ENCODE measurements at regions of chr14 and their contacts with region 1.

Region 1: DNA sequence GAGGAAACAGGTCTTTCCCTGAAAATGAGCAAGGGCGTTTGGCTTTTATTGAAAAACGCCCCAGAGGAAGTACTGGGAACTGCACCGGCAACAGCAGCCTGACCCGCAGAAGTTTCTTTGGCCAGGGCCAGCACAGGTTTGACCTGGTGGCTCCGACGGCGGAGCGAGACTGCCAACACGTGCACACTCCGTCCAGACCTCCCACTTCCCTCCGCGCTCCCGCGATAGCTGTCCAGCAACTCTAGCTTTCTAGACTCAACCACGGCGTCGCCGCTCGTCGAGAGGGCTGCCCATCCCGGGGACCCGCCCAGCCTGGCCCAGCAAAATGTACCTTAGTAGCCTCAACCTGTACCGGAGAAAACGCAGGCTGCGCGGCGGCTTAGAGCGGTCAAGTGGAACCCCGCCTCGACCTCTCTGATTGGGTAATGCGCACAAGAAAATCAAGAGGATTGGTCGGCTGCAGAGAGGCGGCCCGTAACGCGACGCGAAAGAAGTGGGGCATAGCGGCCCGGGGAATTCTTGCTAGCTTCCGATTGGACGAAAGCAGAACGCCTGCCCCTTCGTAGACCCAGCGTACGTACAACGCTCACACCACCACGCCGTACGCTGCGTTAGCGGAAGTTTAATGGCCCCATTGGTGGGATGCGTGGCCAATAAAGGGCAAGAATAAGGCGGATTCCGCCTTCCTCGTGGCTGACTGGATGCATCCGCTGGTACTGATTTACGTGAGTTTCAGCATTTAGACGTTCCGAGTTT is at the start of gene WDR89:
- DNase-seq: peak; percentile 84 to 99 (median 97)
- ATAC-seq: peak; percentile 92
- H3K4me3 ChIP-seq: peak within 1 kb of the TSS; percentile 76
- H3K4me3 Mint-ChIP-seq: peak within 1 kb of the TSS; percentile 84 to 98 (median 91)
- H3K27ac ChIP-seq: peak within 1 kb of the TSS; percentile 95
- H3K27ac Mint-ChIP-seq: peak within 1 kb of the TSS; percentile 88 to 100 (median 97)
- H3K4me1 ChIP-seq: peaks cover 17 to 28% of the 10 kb centered on the region in 2 donors
- H3K4me1 Mint-ChIP-seq: peaks cover 24 to 63% (median 46%) of the 10 kb centered on the region in 7 donors
- H3K27me3 ChIP-seq: no peaks in the 10 kb centered on the region
- H3K27me3 Mint-ChIP-seq: no peaks in the 10 kb centered on the region
- total RNA-seq, gene WDR89: 12.6 to 44.1 (median 24.0) TPM

Region 2: DNA sequence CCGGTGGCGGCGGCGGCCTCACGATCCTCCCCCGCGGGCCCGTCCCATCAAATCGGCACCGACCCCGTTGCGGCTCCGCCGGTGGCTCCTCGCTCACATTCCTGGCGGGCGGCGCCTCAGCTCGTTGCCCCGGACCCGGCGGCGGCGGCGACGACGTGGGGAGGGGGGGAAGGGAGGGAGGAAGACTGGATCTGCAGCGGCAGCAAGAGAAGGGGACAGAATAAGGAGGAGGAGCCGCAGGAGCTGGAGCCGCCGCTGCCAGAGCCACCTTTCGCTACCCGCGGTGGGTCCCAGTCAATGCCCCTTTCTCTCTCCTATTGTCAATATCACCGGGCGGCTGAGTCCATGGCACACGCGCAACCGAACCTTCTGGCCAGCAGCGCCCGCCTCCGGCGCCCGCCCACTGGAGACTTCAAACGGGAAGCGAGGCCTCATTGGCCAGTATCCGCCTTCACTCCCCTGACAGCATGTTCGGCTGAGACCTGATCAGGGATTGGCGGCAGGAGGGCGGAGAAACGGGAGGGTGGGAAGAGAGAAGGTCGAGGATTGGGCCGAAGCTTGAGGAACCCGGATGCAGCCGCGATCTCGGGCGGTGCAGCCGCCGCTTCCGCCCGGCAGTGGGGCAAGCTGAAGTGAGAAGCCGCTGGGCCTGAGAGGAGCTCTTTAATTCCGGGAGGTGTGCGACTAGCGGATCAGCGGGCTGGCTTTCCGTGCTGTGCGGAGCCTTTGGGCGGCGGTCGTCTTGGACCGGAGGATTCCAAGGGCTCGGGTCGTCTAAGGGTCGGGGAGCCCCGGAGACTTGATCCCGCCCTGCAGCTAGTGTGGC is 98.4 kb before region 1 on chr14 and contains the start of gene PPP2R5E:
- CTCF ChIA-PET with region 1: no interaction called
- POLR2A ChIA-PET with region 1: interaction called, 14 read pairs
- intact Hi-C with region 1: loop called (anchors 1 kb)
- DNase-seq: peak; percentile 90 to 98 (median 97)
- ATAC-seq: peak; percentile 98
- H3K4me3 ChIP-seq: peak within 1 kb of the TSS; percentile 89
- H3K4me3 Mint-ChIP-seq: peak within 1 kb of the TSS; percentile 87 to 100 (median 97)
- H3K27ac ChIP-seq: peak within 1 kb of the TSS; percentile 93
- H3K27ac Mint-ChIP-seq: peak within 1 kb of the TSS; percentile 88 to 98 (median 93)
- H3K4me1 ChIP-seq: peaks cover 11 to 20% of the 10 kb centered on the region in 2 donors
- H3K4me1 Mint-ChIP-seq: peaks cover 23 to 40% (median 36%) of the 10 kb centered on the region in 7 donors
- H3K27me3 ChIP-seq: no peaks in the 10 kb centered on the region
- H3K27me3 Mint-ChIP-seq: peaks cover 0 to 2% (median 0%) of the 10 kb centered on the region in 5 donors
- total RNA-seq, gene PPP2R5E: 36.9 to 47.8 (median 37.7) TPM

Region 3: GRCh38 chr14:63581491-63581890 is 60.2 kb before region 1 on chr14:
- CTCF ChIA-PET with region 1: no interaction called
- POLR2A ChIA-PET with region 1: no interaction called
- intact Hi-C with region 1: no loop called
- DNase-seq: no peak
- ATAC-seq: no peak
- H3K4me3 ChIP-seq: no peak overlapping the region
- H3K4me3 Mint-ChIP-seq: no peak overlapping the region
- H3K27ac ChIP-seq: no peak overlapping the region
- H3K27ac Mint-ChIP-seq: no peak overlapping the region
- H3K4me1 ChIP-seq: no peaks in the 10 kb centered on the region
- H3K4me1 Mint-ChIP-seq: no peaks in the 10 kb centered on the region
- H3K27me3 ChIP-seq: no peaks in the 10 kb centered on the region
- H3K27me3 Mint-ChIP-seq: peaks cover 0 to 9% (median 6%) of the 10 kb centered on the region in 5 donors

Region 4: DNA sequence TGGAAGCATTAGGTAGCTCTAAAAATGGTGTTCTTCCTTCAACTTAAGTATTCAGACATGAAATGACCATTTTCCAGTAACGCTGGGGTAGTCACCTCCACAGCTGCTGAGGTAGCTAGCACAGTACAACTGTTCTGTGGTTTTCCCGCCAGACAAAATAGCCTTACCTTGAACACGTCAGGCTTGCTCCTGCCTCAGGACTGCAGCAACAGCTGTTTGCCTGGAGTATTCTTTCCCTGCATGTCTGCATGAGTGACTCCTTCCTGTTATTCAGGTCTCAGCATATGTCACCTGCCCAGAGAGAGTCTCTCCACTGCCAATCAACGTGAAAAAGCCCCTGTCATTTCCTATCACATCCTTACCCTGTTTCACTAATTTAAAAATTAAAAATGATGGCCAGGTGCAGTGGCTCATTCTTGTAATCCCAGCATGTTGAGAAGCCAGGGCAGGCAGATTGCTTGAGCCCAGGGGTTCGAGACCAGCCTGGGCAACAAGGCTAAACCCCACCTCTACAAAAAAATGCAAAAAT is 37.8 kb before region 1 on chr14:
- CTCF ChIA-PET with region 1: no interaction called
- POLR2A ChIA-PET with region 1: no interaction called
- intact Hi-C with region 1: no loop called
- DNase-seq: no peak
- ATAC-seq: no peak
- H3K4me3 ChIP-seq: no peak overlapping the region
- H3K4me3 Mint-ChIP-seq: no peak overlapping the region
- H3K27ac ChIP-seq: peak overlapping the region; percentile 21
- H3K27ac Mint-ChIP-seq: peak overlapping the region in 3 of 9 donors; percentile 26 to 66 (median 54)
- H3K4me1 ChIP-seq: no peaks in the 10 kb centered on the region
- H3K4me1 Mint-ChIP-seq: peaks cover 6 to 26% (median 15%) of the 10 kb centered on the region in 7 donors
- H3K27me3 ChIP-seq: no peaks in the 10 kb centered on the region
- H3K27me3 Mint-ChIP-seq: no peaks in the 10 kb centered on the region

Region 5: DNA sequence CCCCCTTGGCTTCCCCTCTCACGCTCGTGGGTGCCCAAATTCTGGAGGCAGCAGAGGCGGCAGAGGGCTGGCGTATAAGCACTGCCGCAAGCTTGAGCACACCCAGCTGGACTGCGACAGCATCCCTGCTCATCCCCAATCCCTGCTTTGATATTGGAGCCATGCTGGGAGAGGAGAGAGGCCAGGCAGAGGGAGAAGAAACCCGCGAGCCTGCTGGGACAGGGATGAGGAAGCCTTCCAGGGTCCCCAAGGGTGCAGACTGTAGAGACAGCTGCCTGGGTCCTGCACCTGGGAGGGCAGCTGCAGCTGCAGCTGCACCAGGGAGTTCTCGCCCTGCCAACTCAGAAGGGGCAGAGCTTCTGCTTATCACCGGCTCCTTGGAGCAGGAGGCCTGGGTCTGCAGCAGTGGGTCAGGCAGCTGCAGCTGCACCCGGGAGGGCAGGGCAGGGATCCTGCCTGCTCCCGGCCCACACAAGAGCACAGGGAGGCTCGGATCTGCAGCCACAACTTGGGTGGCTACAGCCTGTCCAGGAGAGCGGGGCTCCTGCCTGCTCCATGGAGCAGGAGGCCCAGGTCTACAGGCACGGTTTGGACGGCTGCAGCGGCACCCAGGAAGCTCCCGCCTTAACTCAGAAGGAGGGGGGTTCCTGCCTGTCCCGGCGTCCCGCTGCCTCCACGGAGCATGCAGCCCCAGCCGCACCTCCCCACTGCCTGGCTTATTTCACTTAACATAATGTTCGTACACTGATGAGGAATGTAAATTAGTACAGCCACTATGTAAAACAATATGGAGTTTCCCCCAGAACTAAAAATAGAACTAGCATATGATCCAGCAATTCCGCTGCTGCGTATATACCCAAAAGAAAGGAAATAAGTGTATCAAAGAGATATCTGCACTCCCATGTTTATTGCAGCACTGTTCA is 146.6 kb after region 1 on chr14:
- CTCF ChIA-PET with region 1: no interaction called
- POLR2A ChIA-PET with region 1: no interaction called
- intact Hi-C with region 1: no loop called
- DNase-seq: no peak
- ATAC-seq: no peak
- H3K4me3 ChIP-seq: no peak overlapping the region
- H3K4me3 Mint-ChIP-seq: no peak overlapping the region
- H3K27ac ChIP-seq: no peak overlapping the region
- H3K27ac Mint-ChIP-seq: no peak overlapping the region
- H3K4me1 ChIP-seq: no peaks in the 10 kb centered on the region
- H3K4me1 Mint-ChIP-seq: no peaks in the 10 kb centered on the region
- H3K27me3 ChIP-seq: no peaks in the 10 kb centered on the region
- H3K27me3 Mint-ChIP-seq: peaks cover 0 to 33% (median 0%) of the 10 kb centered on the region in 5 donors

Region 6: GRCh38 chr14:63852817-63853731 is 211.4 kb after region 1 on chr14 and contains the start of gene SYNE2:
- CTCF ChIA-PET with region 1: no interaction called
- POLR2A ChIA-PET with region 1: no interaction called
- intact Hi-C with region 1: loop called (anchors 1 to 2 kb)
- DNase-seq: peak; percentile 67 to 89 (median 80)
- ATAC-seq: peak; percentile 90
- H3K4me3 ChIP-seq: peak within 1 kb of the TSS; percentile 52
- H3K4me3 Mint-ChIP-seq: peak within 1 kb of the TSS; percentile 85 to 99 (median 98)
- H3K27ac ChIP-seq: peak within 1 kb of the TSS; percentile 72
- H3K27ac Mint-ChIP-seq: peak within 1 kb of the TSS; percentile 77 to 98 (median 91)
- H3K4me1 ChIP-seq: peaks cover 29 to 39% of the 10 kb centered on the region in 2 donors
- H3K4me1 Mint-ChIP-seq: peaks cover 30 to 44% (median 42%) of the 10 kb centered on the region in 7 donors
- H3K27me3 ChIP-seq: no peaks in the 10 kb centered on the region
- H3K27me3 Mint-ChIP-seq: peaks cover 0 to 25% (median 0%) of the 10 kb centered on the region in 5 donors
- total RNA-seq, gene SYNE2: 77.7 to 170 (median 149) TPM

Region 7: DNA sequence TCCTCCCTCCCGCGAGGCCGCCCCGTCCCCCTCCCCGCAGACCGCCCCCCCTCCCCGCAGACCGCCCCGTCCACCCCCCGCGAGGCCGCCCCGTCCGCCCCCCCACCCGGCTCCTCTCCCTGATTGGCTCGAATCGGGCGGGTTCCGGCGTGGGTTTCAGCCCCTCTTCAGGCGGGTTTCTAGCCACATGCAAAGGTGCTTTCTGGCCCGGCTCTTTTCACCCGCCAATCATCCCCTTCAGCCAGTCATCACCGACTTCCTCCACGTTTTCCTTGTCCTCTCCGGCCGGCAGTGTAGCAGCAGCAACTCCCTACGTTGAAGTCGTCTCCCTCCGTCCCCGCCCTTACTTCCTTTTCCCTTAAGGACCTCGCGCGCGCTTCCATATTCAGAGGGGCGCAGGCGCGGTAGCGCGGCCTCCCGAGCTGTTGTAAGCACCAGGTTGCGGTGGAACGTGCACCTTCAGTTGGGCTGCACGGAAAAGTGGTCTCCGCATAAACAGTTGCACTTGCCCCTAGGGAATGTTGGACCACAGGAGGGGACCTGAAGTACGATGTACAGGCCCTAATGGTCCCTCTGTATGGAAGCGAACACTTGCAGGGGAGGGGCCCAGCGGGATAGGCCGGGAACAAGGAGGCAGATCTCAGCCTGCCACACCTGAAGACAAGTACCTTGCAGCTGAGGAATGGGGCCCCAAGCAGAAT is 697.1 kb after region 1 on chr14:
- CTCF ChIA-PET with region 1: no interaction called
- POLR2A ChIA-PET with region 1: no interaction called
- intact Hi-C with region 1: loop called (anchors 1 to 2 kb)
- DNase-seq: peak; percentile 50 to 84 (median 79)
- ATAC-seq: peak; percentile 87
- H3K4me3 ChIP-seq: peak overlapping the region; percentile 57
- H3K4me3 Mint-ChIP-seq: peak overlapping the region; percentile 87 to 99 (median 92)
- H3K27ac ChIP-seq: peak overlapping the region; percentile 72
- H3K27ac Mint-ChIP-seq: peak overlapping the region; percentile 81 to 91 (median 86)
- H3K4me1 ChIP-seq: peaks cover 5 to 10% of the 10 kb centered on the region in 2 donors
- H3K4me1 Mint-ChIP-seq: peaks cover 6 to 36% (median 19%) of the 10 kb centered on the region in 7 donors
- H3K27me3 ChIP-seq: no peaks in the 10 kb centered on the region
- H3K27me3 Mint-ChIP-seq: no peaks in the 10 kb centered on the region

Region 8: GRCh38 chr14:64540208-64541157 is 898.8 kb after region 1 on chr14 and contains the start of gene HSPA2:
- CTCF ChIA-PET with region 1: no interaction called
- POLR2A ChIA-PET with region 1: no interaction called
- intact Hi-C with region 1: loop called in 1 of 2 experiments (anchors 5 kb)
- DNase-seq: peak; percentile 87 to 94 (median 91)
- ATAC-seq: peak; percentile 94
- H3K4me3 ChIP-seq: peak within 1 kb of the TSS; percentile 90
- H3K4me3 Mint-ChIP-seq: peak within 1 kb of the TSS; percentile 87 to 98 (median 94)
- H3K27ac ChIP-seq: peak within 1 kb of the TSS; percentile 53
- H3K27ac Mint-ChIP-seq: peak within 1 kb of the TSS; percentile 61 to 95 (median 81)
- H3K4me1 ChIP-seq: peaks cover 4 to 9% of the 10 kb centered on the region in 2 donors
- H3K4me1 Mint-ChIP-seq: peaks cover 21 to 44% (median 34%) of the 10 kb centered on the region in 7 donors
- H3K27me3 ChIP-seq: no peaks in the 10 kb centered on the region
- H3K27me3 Mint-ChIP-seq: peaks cover 0 to 54% (median 3%) of the 10 kb centered on the region in 5 donors
- total RNA-seq, gene HSPA2: 0.32 to 2.5 (median 0.76) TPM

Measured in naive thymus-derived CD4-positive, alpha-beta T cell (primary cell).